HepG2 (cell line): ENCODE measurements at regions of chr1 and their contacts with region 1.

Region 1: GRCh38 chr1:170067253-170067819 is 7.2 kb downstream of the KIFAP3 start:
- DNase-seq: no peak
- ATAC-seq: no peak
- H3K4me3 ChIP-seq: no peak overlapping the region
- H3K27ac ChIP-seq: no peak overlapping the region
- H3K4me1 ChIP-seq: peaks cover 10% of the 10 kb centered on the region
- H3K27me3 ChIP-seq: no peaks in the 10 kb centered on the region
- CTCF ChIP-seq: no peak
- EP300 ChIP-seq: no peak
- POLR2A ChIP-seq: no peak
- RAD21 ChIP-seq: no peak

Region 2: GRCh38 chr1:169999331-169999741 is 68.0 kb before region 1 on chr1:
- CTCF ChIA-PET with region 1: no interaction called
- POLR2A ChIA-PET with region 1: no interaction called
- in situ Hi-C with region 1: no loop called
- intact Hi-C with region 1: loop called (anchors 1 kb)
- DNase-seq: no peak
- ATAC-seq: no peak
- H3K4me3 ChIP-seq: no peak overlapping the region
- H3K27ac ChIP-seq: no peak overlapping the region
- H3K4me1 ChIP-seq: no peaks in the 10 kb centered on the region
- H3K27me3 ChIP-seq: no peaks in the 10 kb centered on the region; a peak in 1 of 5 replicates
- CTCF ChIP-seq: no peak
- EP300 ChIP-seq: no peak
- POLR2A ChIP-seq: no peak
- RAD21 ChIP-seq: no peak

Region 3: GRCh38 chr1:170044187-170044586 is 23.1 kb before region 1 on chr1:
- CTCF ChIA-PET with region 1: no interaction called
- POLR2A ChIA-PET with region 1: no interaction called
- in situ Hi-C with region 1: no loop called
- intact Hi-C with region 1: no loop called
- DNase-seq: no peak
- ATAC-seq: no peak
- H3K4me3 ChIP-seq: no peak overlapping the region
- H3K27ac ChIP-seq: no peak overlapping the region
- H3K4me1 ChIP-seq: no peaks in the 10 kb centered on the region
- H3K27me3 ChIP-seq: no peaks in the 10 kb centered on the region
- CTCF ChIP-seq: no peak
- EP300 ChIP-seq: no peak
- POLR2A ChIP-seq: no peak
- RAD21 ChIP-seq: no peak

Region 4: DNA sequence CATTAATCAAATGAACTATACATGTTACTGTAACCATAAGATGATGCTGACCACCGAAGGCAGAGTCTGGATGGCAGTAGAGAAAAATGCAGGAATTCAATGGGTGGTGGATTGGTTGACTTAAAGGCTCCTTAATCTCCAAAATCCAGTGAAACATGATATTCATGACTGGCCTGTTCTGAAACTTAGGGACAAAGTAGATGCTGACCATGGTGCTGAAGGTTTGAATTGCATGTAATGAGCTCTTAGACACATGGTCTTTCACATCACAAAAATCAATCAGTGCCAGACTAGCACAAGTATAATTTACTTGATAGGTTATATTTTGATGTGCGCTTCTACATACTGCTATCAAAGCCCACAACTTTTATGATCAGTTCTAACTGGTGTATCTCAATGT is 47.6 kb after region 1 on chr1:
- CTCF ChIA-PET with region 1: no interaction called
- POLR2A ChIA-PET with region 1: no interaction called
- in situ Hi-C with region 1: no loop called
- intact Hi-C with region 1: no loop called
- DNase-seq: no peak
- ATAC-seq: no peak
- H3K4me3 ChIP-seq: no peak overlapping the region
- H3K27ac ChIP-seq: no peak overlapping the region
- H3K4me1 ChIP-seq: no peaks in the 10 kb centered on the region
- H3K27me3 ChIP-seq: no peaks in the 10 kb centered on the region
- CTCF ChIP-seq: no peak
- EP300 ChIP-seq: no peak
- POLR2A ChIP-seq: no peak
- RAD21 ChIP-seq: no peak